Tibial artery (tissue), 4 donors: ENCODE measurements at regions of chr20 and their contacts with region 1.

Region 1: GRCh38 chr20:38290832-38291581 is 12.9 kb upstream of the BPI start:
- DNase-seq: peak in 1 of 2 donors; percentile 72
- H3K4me3 ChIP-seq: no peak overlapping the region
- H3K27ac ChIP-seq: peak overlapping the region in 1 of 2 donors; percentile 1
- H3K4me1 ChIP-seq: peaks cover 0 to 11% (median 6%) of the 10 kb centered on the region in 4 donors
- H3K27me3 ChIP-seq: no peaks in the 10 kb centered on the region
- CTCF ChIP-seq: peak in 1 of 2 experiments; percentile 35

Region 2: DNA sequence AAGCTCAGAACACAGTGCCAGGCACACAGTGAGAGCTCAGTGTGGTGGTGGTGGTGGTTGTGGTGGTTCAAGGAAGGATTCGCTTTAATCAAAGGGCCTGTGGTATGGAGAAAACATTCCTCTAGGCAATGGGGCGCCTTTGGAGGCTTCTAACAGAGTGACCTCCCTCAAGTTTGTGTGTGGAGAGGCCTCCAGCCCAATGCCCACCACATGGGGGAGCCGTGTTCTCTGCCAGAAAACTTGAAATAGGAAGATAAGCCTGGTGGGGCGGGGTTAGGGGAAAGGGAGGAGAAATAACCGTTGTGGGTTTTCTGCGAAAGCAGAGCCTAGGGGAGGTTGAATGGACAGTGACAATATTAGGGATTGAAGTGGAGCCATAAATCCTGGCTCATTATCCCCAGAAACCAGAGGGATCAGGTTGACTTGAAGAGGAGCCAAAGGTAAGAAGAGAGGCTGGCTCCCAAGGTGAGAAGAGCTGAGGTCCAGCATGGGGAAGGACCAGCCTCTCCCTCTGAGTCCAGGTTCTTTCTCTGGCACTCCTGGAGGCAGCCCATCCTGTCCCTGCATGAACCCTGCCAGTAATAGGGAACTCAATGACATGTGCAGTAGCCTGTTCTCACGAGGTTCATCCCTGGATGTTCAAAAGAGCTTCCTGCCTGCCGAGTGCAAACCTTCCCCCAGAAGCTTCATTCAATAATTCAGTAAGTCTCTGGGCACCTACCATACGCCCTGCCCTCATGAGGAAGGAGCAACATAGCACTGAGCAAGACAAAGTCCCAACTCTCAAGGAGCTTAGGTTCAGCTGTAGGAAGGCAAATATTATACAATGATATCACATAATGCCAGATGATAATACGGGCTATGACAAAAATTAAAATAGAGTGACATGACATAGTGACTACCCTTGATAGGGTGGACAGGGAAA is 177.3 kb before region 1 on chr20:
- intact Hi-C with region 1: no loop called
- DNase-seq: no peak
- H3K4me3 ChIP-seq: no peak overlapping the region
- H3K27ac ChIP-seq: peak overlapping the region; percentile 62 to 84
- H3K4me1 ChIP-seq: peaks cover 0 to 47% (median 32%) of the 10 kb centered on the region in 4 donors
- H3K27me3 ChIP-seq: no peaks in the 10 kb centered on the region
- CTCF ChIP-seq: no peak

Region 3: GRCh38 chr20:38210741-38211140 is 80.3 kb before region 1 on chr20:
- intact Hi-C with region 1: no loop called
- DNase-seq: peak; percentile 13 to 65
- H3K4me3 ChIP-seq: no peak overlapping the region
- H3K27ac ChIP-seq: peak overlapping the region; percentile 78 to 82
- H3K4me1 ChIP-seq: peaks cover 0 to 55% (median 35%) of the 10 kb centered on the region in 4 donors
- H3K27me3 ChIP-seq: no peaks in the 10 kb centered on the region
- CTCF ChIP-seq: no peak

Region 4: DNA sequence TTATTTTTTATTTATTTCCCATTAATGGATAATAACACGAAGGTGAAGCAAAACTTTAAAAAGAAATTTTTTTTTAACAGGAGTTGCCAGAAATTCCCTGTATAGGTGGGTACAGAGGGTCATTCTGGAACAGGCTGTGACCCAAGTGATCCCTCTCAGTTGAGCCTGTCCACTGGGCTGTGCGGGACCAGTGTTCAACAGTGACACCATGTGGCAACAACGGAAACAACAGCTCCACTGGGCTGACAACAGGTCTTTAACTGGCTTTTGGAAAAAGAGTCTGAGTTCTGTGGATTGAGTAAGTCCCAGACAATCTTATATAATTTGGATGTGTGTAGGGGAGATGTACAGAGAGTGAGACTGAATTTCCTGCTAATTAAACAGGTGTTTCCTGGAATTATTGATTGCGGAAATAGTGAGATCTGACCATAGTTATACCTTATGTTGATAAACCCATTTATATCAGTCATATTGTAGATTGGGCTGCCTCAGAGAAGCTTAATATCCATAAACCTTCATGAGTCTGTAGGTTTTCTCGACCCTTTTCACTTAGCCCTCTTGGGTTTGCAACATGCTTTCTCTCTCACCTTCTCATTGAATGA is 48.1 kb before region 1 on chr20:
- intact Hi-C with region 1: loop called (anchors 10 kb)
- DNase-seq: no peak
- H3K4me3 ChIP-seq: no peak overlapping the region
- H3K27ac ChIP-seq: no peak overlapping the region
- H3K4me1 ChIP-seq: peaks cover 0 to 8% (median 4%) of the 10 kb centered on the region in 4 donors
- H3K27me3 ChIP-seq: no peaks in the 10 kb centered on the region
- CTCF ChIP-seq: no peak